AG04450 (cell line): ENCODE measurements at regions of chr19 and their contacts with region 1.

Region 1: DNA sequence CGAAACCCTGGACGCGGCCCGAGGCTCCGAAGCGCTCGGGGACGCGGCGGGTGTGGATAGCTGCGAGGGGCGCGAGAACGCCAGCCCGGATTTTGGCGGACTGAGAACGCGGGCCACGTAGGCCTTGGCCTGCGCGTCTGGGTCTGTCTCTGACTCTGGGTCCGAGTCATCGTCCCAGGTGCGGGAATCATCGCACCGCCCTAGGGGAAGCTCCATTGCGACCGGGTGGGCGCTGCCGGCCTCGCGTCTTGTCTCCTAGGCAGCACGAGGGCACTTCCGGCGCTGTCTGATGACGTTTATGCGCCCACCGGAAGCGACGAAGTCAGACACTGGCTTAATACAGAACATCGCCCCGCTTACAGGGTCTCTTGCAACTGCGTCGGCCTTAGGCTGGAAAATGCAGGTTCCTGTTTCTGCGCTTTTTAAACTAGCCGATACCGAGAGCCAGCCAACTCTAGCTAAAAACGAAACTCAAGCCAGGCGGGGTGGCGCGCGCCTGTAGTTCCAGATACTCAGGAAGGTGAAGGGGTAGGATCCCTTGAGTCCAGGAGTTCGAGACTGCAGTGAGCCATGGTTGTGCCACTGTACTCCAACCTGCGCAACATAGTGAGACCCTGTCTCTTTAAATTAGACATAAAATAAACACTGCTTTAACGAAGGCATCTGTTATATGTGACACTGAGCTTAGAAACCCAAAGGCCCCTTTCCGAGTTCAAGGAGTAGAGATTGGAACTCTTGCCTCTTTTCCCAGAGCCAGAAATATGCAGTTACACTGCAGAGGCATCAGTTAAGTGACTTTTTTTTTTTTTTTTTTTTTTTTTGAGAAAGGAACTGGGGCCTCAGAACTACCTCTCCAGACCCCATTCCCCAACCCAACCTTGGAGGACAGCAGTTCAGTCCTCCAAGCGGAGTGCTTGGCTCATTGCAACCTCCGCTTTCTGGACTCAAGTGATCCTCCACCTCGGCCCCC is at the start of gene FBXW9:
- DNase-seq: peak; percentile 88
- H3K4me3 ChIP-seq: peak within 1 kb of the TSS; percentile 96
- H3K27ac ChIP-seq: peak within 1 kb of the TSS; percentile 75
- H3K27me3 ChIP-seq: no peaks in the 10 kb centered on the region
- CTCF ChIP-seq: no peak
- polyA plus RNA-seq, gene FBXW9: 4.8 and 7.2 TPM in 2 replicates

Region 2: DNA sequence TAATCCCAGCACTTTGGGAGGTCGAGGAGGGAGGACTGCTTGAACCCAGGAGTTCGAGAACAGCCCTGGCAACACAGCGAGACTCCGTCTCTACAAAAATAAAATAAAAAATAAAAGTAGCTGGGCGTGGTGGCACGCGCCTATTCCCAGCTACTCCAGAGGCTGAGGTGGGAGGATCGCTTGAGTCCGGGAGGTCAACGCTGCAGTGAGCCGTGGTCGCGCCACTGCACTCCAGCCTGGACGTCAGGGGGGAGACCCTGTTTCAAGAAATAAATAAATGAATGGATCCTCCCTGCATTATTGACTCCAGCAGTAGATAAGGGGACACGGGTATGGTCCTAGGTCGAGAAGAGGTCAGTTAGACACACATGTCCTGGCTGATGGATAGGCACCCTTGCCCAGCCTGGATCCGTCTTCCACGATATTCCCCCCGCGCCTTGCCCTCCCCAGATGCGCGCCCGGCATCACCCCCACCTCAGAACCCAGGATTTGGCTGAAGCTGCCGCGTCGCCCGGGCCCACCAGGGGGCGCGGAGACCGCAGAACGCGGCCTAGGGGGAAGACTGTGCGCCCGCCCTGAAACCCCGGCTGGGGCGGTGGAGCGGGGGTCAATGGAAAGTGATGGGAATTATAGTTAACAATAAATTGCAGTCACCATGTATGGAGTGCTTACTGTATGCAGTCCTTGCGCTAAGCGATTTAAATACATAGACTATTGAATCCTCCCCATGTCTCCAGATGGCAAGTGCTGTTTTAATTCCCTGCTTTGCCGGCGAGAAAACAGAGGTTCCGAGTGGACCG is 80.8 kb after region 1 on chr19:
- CTCF ChIA-PET with region 1: no interaction called
- POLR2A ChIA-PET with region 1: interaction called, 14 read pairs
- DNase-seq: no peak
- H3K4me3 ChIP-seq: peak overlapping the region; percentile 68
- H3K27ac ChIP-seq: peak overlapping the region; percentile 98
- H3K27me3 ChIP-seq: no peaks in the 10 kb centered on the region
- CTCF ChIP-seq: peak; percentile 88